ENCODE measurements at regions of chr5 and their contacts with region 1.

Region 1: GRCh38 chr5:141475625-141476131 is at the start of gene PCDHGC3:
- DNase-seq: peak; percentile 95
- H3K4me3 ChIP-seq: peak within 1 kb of the TSS; percentile 50 to 73 (median 72)
- H3K27ac ChIP-seq: peak within 1 kb of the TSS; percentile 79
- H3K4me1 ChIP-seq: peaks cover 25% of the 10 kb centered on the region
- H3K27me3 ChIP-seq: no peaks in the 10 kb centered on the region
- CTCF ChIP-seq: peak; percentile 14 to 46
- total RNA-seq, gene PCDHGC3: 74.7 to 76.3 TPM

Region 2: GRCh38 chr5:141430332-141431113 is 45.2 kb before region 1 on chr5 and contains the start of gene PCDHGA12:
- CTCF ChIA-PET with region 1: interaction called, 5 read pairs
- dilution Hi-C with region 1: no loop called
- in situ Hi-C with region 1: no loop called
- intact Hi-C with region 1: loop called (anchors 1 kb)
- DNase-seq: peak; percentile 82
- H3K4me3 ChIP-seq: peak within 1 kb of the TSS in 2 of 3 experiments; percentile 3 to 17
- H3K27ac ChIP-seq: no peak within 1 kb of the TSS
- H3K4me1 ChIP-seq: no peaks in the 10 kb centered on the region
- H3K27me3 ChIP-seq: no peaks in the 10 kb centered on the region
- CTCF ChIP-seq: peak; percentile 58 to 65
- total RNA-seq, gene PCDHGA12: 3.2 to 24.5 TPM